Left ventricle myocardium superior (tissue), 1 donor: ENCODE measurements at regions of chr1 and their contacts with region 1.

Region 1: GRCh38 chr1:26169669-26170471 is at the start of gene ZNF593:
- DNase-seq: peak; percentile 96
- ATAC-seq: peak; percentile 96
- total RNA-seq, gene ZNF593: 11.6 TPM

Region 2: DNA sequence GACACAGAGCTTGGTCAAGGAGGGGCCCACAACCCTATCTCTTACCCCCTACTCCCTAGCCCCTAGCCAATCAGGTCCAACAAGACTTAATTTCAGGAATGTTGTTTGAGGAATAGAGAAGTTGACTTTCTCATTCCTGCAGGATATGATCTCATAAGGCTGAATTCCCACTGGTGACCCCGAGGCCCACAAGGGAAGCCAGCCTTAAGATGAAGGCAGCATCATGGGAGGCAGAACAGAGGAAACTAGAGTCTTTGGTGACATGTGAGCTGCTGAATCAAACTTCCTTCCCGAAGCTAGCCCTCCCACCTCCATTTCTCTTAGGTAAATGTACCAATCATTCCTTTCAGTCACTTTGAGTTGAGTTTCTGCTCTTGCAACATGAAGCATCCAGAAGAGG is 67.3 kb before region 1 on chr1:
- intact Hi-C with region 1: loop called (anchors 10 kb)
- DNase-seq: no peak
- ATAC-seq: no peak

Region 3: GRCh38 chr1:26203642-26204318 is 33.9 kb after region 1 on chr1:
- intact Hi-C with region 1: no loop called
- DNase-seq: no peak
- ATAC-seq: no peak